AG04449 (cell line): ENCODE measurements at regions of chr6 and their contacts with region 1.

Region 1: DNA sequence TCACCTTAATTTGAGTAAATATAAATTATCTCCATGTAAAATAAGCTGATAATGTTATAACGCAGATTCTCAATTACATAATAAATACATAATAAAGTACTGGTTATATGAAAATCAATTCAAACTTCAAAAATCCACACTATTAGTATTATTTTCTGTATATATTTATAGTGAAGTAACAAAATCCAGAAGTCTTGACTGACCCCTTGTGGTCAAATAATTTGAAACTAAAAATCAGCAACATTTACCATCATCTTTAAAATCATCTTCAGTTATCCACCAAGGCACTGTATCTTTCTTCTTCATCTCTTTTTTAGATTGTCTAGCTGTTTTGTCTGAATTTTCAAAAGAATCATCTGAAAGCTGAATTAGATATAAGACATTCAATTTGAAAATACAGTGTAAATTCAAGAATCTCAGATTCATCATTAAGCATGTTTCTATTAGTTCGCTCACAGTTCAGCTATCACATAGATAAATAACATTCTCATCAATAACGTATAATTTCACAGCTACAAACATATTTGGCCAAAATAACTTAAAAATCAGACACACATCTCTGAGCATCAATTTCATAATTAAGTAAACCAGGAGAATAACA is 6.5 kb downstream of the CEP162 start:
- DNase-seq: no peak
- H3K4me3 ChIP-seq: no peak overlapping the region
- CTCF ChIP-seq: peak; percentile 10

Region 2: GRCh38 chr6:83615025-83615999 is 605.6 kb before region 1 on chr6:
- CTCF ChIA-PET with region 1: interaction called, 49 read pairs
- POLR2A ChIA-PET with region 1: no interaction called
- DNase-seq: peak; percentile 12
- H3K4me3 ChIP-seq: no peak overlapping the region
- CTCF ChIP-seq: peak; percentile 37

Region 3: DNA sequence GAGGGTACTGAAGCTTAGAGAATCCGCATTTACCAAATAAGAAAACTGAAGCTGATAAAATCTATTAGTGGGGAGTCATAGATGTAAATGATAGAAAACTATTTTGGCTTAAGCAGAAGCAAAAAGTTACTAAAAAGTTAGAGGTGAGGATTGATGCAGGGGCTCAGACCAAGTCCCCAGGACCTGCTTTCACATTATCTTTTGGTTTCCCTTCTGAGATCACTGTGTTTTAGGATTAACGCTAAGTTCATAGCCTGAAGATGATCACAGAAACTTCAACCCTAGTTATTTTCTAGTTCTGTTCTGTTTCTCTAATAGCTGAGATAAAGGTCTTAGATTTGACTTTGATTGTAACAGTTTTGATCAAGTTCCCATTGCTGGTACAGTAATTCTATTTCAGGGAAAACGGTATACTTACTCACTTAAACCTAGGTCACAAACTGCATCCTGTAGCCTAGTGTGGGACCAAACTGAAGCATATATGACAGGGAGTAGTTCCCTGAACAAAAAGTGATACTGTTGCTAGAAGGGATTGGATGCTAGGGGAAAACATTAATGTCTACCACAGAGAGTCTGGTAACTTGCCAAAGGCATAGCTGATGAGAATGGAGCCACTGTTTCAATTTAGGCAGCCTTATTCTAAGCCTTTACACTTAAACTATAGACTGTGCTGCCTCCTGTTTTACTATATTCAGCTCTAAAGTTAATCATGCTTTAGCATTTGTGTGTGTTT is 348.4 kb before region 1 on chr6:
- CTCF ChIA-PET with region 1: interaction called, 12 read pairs
- POLR2A ChIA-PET with region 1: no interaction called
- DNase-seq: no peak
- H3K4me3 ChIP-seq: no peak overlapping the region
- CTCF ChIP-seq: no peak

Region 4: GRCh38 chr6:83884523-83884922 is 336.4 kb before region 1 on chr6:
- CTCF ChIA-PET with region 1: interaction called, 121 read pairs
- POLR2A ChIA-PET with region 1: no interaction called
- DNase-seq: no peak
- H3K4me3 ChIP-seq: no peak overlapping the region
- CTCF ChIP-seq: peak; percentile 41

Region 5: DNA sequence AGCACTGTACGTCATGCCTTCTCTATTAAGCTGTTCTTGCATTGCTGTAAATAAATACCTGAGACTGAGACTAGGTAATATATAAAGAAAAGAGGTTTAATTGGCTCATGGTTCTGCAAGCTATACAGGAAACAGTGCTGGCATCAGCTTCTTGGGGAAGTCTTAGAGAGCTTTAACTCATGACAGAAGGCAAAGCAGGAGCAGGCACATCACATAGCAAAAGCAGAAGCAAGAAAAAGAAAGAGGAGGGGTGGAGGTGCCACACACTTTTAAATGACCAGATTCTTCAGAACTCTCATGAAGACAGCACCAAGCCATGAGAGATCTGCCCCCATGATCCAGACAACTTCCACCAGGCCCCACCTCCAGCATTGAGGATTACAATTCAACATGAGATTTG is 331.3 kb before region 1 on chr6:
- CTCF ChIA-PET with region 1: interaction called, 121 read pairs
- POLR2A ChIA-PET with region 1: no interaction called
- DNase-seq: no peak
- H3K4me3 ChIP-seq: no peak overlapping the region
- CTCF ChIP-seq: no peak